ENCODE measurements at regions of chr6 and their contacts with region 1.

Region 1: GRCh38 chr6:97059473-97059872 is 134.9 kb downstream of the KLHL32 start:
- DNase-seq: peak; percentile 54
- H3K4me3 Mint-ChIP-seq: no peak overlapping the region
- H3K27ac Mint-ChIP-seq: no peak overlapping the region
- H3K4me1 Mint-ChIP-seq: no peaks in the 10 kb centered on the region
- H3K27me3 Mint-ChIP-seq: peaks cover 2% of the 10 kb centered on the region

Region 2: DNA sequence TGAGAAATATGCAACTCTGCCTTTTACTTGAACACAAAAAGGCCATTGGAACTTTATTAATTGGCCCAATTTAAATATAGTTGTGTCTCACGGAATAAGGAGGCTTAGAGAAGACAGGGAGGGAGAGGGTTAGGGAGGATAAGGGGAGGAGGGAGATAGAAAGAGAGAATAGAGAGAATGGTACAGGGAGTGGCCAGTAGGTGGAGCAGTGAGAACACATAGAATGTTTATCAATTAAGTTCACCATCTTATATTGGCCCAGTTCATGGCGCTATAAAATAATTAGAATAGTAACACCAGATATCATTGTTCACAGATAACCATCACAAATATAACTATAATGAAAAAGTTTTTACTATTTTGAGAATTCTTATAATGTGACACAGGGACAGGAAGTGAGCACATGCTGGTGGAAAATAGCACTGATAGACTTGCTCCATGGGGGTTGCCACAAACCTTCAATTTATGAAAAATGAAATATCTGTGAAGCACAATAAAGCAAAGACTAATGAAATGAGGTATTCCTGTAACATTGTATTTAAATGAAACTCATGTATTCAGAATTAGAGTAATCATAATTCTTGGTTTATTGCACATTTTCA is 1856.2 kb before region 1 on chr6:
- intact Hi-C with region 1: loop called (anchors 10 kb)
- DNase-seq: peak; percentile 60
- H3K4me3 Mint-ChIP-seq: no peak overlapping the region
- H3K27ac Mint-ChIP-seq: no peak overlapping the region
- H3K4me1 Mint-ChIP-seq: no peaks in the 10 kb centered on the region
- H3K27me3 Mint-ChIP-seq: no peaks in the 10 kb centered on the region

Region 3: DNA sequence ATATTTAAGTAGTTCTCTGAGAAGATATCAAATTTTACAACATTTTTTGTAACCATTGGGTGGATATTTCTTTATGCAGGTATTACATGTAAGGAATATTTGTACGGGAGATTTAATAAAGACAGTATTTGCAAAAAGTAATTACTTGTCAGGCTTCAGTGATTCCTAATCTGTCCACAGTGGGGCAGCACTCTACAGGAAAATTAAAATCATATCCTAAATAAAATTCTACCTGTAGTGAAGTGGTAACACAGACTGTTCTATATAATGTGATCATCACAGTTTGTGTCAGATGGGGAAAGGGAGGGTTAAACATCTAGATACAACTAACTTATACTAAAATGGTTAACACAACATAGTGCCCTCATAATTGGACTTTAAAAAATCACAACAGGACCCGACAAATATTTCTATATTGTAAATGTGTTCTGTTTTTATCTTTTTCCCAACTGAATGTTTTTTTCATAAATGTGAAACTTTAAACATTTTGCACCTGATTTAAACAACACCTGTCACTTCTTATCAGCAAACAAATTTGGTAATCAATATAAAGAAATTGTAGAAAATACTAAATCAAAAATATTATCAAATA is 1627.7 kb before region 1 on chr6:
- intact Hi-C with region 1: loop called (anchors 5 kb)
- DNase-seq: peak; percentile 72
- H3K4me3 Mint-ChIP-seq: no peak overlapping the region
- H3K27ac Mint-ChIP-seq: no peak overlapping the region
- H3K4me1 Mint-ChIP-seq: no peaks in the 10 kb centered on the region
- H3K27me3 Mint-ChIP-seq: no peaks in the 10 kb centered on the region

Region 4: GRCh38 chr6:96301770-96302169 is 757.7 kb before region 1 on chr6:
- intact Hi-C with region 1: no loop called
- DNase-seq: no peak
- H3K4me3 Mint-ChIP-seq: no peak overlapping the region
- H3K27ac Mint-ChIP-seq: no peak overlapping the region
- H3K4me1 Mint-ChIP-seq: peaks cover 3% of the 10 kb centered on the region
- H3K27me3 Mint-ChIP-seq: peaks cover 1% of the 10 kb centered on the region

Region 5: DNA sequence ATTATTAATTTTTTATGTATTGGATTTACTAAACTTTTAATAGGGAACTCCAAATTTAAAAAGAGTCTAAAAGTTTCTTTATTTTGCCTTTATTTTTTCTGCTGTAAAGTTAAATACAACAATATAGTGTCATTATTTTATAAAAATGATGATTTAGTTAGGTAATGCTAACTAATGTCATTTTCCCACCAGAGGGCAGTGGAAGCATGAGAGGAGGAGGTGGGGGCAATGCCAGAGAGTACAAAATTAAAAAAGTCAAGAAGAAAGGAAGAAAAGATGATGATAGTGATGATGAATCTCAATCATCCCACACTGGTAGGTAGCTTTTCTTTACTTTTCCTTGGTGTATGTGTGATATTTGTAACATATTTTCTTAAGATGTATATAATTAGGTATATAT is 516.8 kb before region 1 on chr6:
- intact Hi-C with region 1: loop called (anchors 2 kb)
- DNase-seq: no peak
- H3K4me3 Mint-ChIP-seq: no peak overlapping the region
- H3K27ac Mint-ChIP-seq: no peak overlapping the region
- H3K4me1 Mint-ChIP-seq: no peaks in the 10 kb centered on the region
- H3K27me3 Mint-ChIP-seq: no peaks in the 10 kb centered on the region

Region 6: DNA sequence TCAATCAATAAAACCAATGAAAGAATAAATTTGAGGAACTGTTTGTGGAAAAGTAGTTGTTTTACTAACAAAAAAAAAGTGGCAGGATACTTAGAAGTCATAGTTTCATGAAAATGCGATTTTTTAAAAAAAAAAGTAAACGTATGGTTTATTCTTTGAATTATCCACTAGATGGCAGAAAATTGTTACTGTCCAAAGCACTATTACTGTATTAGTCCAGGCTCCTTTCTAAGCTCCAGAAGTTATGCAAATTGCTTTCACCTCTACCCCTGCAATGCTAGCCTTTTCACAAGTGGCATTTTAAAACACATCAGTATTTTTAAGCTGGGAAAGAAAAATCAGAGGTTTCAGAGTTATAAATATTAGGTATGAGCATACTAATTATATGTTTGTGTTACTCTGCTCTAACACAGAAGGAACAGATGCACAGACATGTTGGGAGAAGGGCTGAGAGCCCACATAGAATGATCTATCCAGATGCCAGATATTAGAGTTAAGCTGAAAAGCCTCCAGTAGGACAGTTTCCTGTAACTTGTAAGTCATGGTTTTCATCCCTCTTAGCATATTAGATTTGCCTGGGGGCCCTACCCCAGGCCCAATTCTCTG is 432.6 kb before region 1 on chr6:
- intact Hi-C with region 1: loop called (anchors 1 kb)
- DNase-seq: no peak
- H3K4me3 Mint-ChIP-seq: no peak overlapping the region
- H3K27ac Mint-ChIP-seq: no peak overlapping the region
- H3K4me1 Mint-ChIP-seq: peaks cover 5% of the 10 kb centered on the region
- H3K27me3 Mint-ChIP-seq: peaks cover 20% of the 10 kb centered on the region

Region 7: GRCh38 chr6:96939007-96939805 is 120.3 kb before region 1 on chr6:
- intact Hi-C with region 1: no loop called
- DNase-seq: no peak
- H3K4me3 Mint-ChIP-seq: no peak overlapping the region
- H3K27ac Mint-ChIP-seq: no peak overlapping the region
- H3K4me1 Mint-ChIP-seq: peaks cover 8% of the 10 kb centered on the region
- H3K27me3 Mint-ChIP-seq: peaks cover 5% of the 10 kb centered on the region

Measured in activated CD4-positive, alpha-beta T cell treated with anti-CD3 and anti-CD28 coated beads, Interleukin-2, amount 10 ng/mL, durations not matched to agents 24 days and 14 days (primary cell).